ENCODE measurements at regions of chr3 and their contacts with region 1.

Region 1: GRCh38 chr3:190617185-190617584 is 103.3 kb downstream of the IL1RAP start:
- DNase-seq: peak; percentile 58
- H3K4me3 Mint-ChIP-seq: peak overlapping the region; percentile 61
- H3K27ac Mint-ChIP-seq: peak overlapping the region; percentile 97
- H3K4me1 Mint-ChIP-seq: peaks cover 91% of the 10 kb centered on the region
- H3K27me3 Mint-ChIP-seq: no peaks in the 10 kb centered on the region

Region 2: DNA sequence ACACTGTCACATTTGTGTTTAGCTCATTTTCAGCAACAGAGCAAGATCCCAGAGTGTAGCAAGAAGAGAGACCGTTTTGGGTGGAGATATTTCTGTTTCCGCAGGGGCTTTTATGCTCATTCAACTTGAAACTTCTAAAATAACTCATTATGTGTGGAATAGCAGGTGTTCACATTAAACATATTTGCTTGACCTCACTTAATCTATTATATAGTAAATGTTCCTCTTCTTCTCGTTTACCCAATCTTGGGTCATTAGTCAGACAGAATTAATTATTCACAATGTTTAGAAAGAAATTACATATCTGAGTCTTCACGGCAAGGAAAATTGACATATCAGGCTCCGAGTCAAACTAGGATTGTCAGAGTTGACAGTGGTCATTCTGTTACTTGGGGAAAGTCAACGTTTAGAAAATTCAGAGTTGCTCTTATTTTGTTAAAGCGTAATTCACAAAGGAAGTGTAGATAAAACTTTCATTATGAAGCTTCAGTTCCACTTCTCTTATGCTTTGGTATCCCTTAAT is 1222.5 kb before region 1 on chr3:
- intact Hi-C with region 1: loop called (anchors 2 kb)
- DNase-seq: no peak
- H3K4me3 Mint-ChIP-seq: peak overlapping the region; percentile 20
- H3K27ac Mint-ChIP-seq: peak overlapping the region; percentile 76
- H3K4me1 Mint-ChIP-seq: peaks cover 34% of the 10 kb centered on the region
- H3K27me3 Mint-ChIP-seq: no peaks in the 10 kb centered on the region

Region 3: DNA sequence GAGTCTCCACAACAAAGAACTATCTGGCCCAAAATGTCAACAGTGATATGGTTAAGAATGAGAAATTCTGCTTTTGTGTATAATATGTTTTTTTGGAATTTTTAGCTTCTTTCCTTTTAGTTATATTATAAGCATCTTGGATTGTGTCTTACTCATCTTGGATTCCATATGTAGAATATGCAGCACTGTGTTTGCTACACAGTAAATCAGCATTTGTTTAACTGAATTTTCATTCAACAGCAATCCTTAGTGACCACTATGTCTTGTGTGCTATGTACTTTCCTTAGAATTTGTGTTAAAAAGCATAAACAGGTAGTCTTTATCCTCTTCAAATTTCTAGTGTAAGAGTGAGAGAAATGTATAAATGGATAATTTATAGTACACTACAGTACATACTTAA is 149.3 kb before region 1 on chr3:
- intact Hi-C with region 1: no loop called
- DNase-seq: no peak
- H3K4me3 Mint-ChIP-seq: no peak overlapping the region
- H3K27ac Mint-ChIP-seq: no peak overlapping the region
- H3K4me1 Mint-ChIP-seq: no peaks in the 10 kb centered on the region
- H3K27me3 Mint-ChIP-seq: peaks cover 27% of the 10 kb centered on the region

Region 4: GRCh38 chr3:190491533-190492054 is 125.6 kb before region 1 on chr3:
- intact Hi-C with region 1: loop called (anchors 1 kb)
- DNase-seq: no peak
- H3K4me3 Mint-ChIP-seq: no peak overlapping the region
- H3K27ac Mint-ChIP-seq: peak overlapping the region; percentile 7
- H3K4me1 Mint-ChIP-seq: peaks cover 27% of the 10 kb centered on the region
- H3K27me3 Mint-ChIP-seq: peaks cover 67% of the 10 kb centered on the region

Region 5: DNA sequence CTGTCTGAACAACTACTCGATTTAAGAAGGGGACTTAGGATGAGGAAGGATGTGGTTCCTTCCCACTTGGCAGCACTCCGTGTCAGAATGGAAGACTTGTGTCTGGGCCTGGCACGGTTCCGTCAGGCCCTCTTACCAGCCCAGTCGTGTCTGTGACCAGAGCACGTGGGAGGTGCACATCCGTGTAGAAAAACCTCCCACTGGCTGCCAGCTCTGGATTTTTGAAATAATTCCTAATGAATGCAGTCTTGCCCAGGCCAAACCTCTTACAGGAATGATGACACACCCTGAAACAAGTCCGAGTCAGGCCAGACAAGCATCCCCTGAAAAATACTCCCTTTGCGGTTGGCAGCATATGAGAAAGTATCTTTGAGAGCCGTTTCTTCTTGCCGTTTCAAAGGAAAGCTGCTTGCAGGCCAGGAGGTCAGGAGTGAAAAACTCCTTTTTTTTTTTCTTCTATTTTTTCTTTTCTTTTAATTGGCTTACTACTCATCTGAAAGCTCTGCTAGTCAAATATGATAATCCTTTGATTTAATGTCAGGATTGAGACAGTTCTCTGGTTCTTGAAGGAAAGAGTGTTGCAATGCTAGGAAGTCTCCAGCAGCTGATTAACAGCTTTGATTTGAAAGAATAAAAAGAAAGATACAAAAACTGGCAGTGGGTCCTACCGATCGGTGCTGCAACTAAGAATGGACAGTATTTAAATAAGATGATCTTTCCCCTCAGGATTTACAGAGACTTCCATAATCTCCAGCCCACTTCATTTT is 83.5 kb before region 1 on chr3:
- intact Hi-C with region 1: no loop called
- DNase-seq: no peak
- H3K4me3 Mint-ChIP-seq: no peak overlapping the region
- H3K27ac Mint-ChIP-seq: no peak overlapping the region
- H3K4me1 Mint-ChIP-seq: peaks cover 56% of the 10 kb centered on the region
- H3K27me3 Mint-ChIP-seq: no peaks in the 10 kb centered on the region

Region 6: GRCh38 chr3:190575437-190576185 is 41.6 kb before region 1 on chr3:
- intact Hi-C with region 1: no loop called
- DNase-seq: no peak
- H3K4me3 Mint-ChIP-seq: no peak overlapping the region
- H3K27ac Mint-ChIP-seq: peak overlapping the region; percentile 59
- H3K4me1 Mint-ChIP-seq: peaks cover 55% of the 10 kb centered on the region
- H3K27me3 Mint-ChIP-seq: no peaks in the 10 kb centered on the region

Region 7: DNA sequence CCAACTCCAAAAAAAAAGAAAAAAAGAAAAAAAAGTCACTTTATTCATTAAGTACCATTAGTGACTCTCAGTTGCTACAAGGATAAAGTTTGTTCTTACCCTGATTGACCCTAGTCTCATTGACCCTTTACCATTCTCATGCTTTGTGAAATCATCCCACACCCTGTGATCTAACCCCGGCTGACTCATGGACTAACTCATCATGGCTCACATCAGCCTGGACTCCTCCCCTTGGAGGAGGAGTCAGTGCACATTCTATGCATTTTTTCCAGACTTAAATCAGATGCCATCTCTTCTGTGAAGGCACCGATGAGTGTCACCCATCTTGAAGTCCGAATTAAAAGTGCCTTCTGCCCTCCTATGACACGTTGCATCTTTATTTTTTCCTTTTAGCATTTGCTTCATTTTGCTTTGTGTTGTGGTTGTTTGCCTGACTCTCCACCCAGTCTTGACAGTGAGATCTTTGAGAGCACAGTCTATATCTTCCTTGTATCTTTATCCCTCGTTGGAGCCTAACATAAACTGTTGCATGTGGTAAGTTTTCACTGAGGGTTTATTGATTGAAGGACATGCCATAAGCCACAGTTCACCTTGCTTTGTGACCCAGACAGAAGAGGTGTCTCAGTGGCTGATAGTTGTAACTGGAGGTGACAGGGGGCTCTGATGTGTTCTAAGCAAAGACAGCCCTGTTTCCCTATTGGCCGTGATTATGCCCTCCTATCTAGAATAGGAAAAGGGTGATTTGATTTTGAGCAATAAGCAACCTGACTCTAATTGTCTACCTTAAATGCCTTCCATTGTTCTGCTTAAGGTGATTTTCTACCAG is 31.2 kb before region 1 on chr3:
- intact Hi-C with region 1: loop called (anchors 1 kb)
- DNase-seq: peak; percentile 49
- H3K4me3 Mint-ChIP-seq: peak overlapping the region; percentile 72
- H3K27ac Mint-ChIP-seq: peak overlapping the region; percentile 97
- H3K4me1 Mint-ChIP-seq: peaks cover 46% of the 10 kb centered on the region
- H3K27me3 Mint-ChIP-seq: no peaks in the 10 kb centered on the region